ENCODE measurements at regions of chr12 and their contacts with region 1.

Region 1: GRCh38 chr12:54398995-54399793 is 14.7 kb upstream of the ZNF385A start:
- DNase-seq: peak; percentile 84 to 86 (median 85)
- H3K4me3 ChIP-seq: no peak overlapping the region
- H3K4me3 Mint-ChIP-seq: no peak overlapping the region
- H3K27ac ChIP-seq: peak overlapping the region; percentile 10 to 25
- H3K27ac Mint-ChIP-seq: peak overlapping the region in 5 of 7 donors; percentile 35 to 73 (median 43)
- H3K4me1 ChIP-seq: peaks cover 8 to 16% of the 10 kb centered on the region in 2 donors
- H3K4me1 Mint-ChIP-seq: peaks cover 10% of the 10 kb centered on the region
- H3K27me3 ChIP-seq: no peaks in the 10 kb centered on the region
- H3K27me3 Mint-ChIP-seq: no peaks in the 10 kb centered on the region
- CTCF ChIP-seq: peak; percentile 97

Region 2: DNA sequence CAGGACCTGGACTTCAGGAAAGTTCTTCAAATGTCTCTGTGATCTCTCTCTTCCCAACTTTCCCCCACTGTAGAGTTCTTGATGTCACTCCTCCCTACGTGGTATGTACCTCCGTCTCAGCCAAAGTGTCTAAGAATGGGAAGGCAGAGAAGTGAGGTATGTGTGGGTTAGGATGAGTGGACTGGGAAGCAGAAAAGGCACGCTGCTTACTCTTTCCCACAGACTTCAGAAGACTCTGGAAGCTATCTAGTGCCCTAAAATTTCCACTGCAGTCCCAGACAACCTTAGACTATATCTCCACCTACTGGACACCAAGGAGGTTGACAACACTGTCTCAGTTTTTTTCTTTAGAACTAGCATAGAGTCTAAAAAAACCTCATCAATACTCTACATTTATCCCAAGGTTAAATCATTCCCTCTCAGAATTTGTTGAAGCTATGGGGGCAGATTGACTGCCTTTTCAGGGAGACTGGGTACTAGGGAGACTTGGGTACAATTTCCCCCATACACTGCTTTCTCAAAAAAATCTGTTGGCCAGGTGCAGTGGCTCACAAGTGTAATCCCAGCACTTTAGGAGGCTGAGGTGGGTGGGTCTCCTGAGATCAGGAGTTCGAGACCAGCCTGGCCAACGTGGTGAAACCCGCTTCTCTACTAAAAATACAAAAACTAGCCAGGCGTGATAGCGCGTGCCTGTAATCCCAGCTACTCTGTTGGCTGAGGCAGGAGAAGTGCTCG is 40.5 kb after region 1 on chr12:
- intact Hi-C with region 1: loop called (anchors 1 to 2 kb)
- DNase-seq: peak; percentile 45 to 80 (median 70)
- H3K4me3 ChIP-seq: no peak overlapping the region
- H3K4me3 Mint-ChIP-seq: no peak overlapping the region
- H3K27ac ChIP-seq: no peak overlapping the region
- H3K27ac Mint-ChIP-seq: peak overlapping the region in 1 of 7 donors; percentile 56
- H3K4me1 ChIP-seq: peaks cover 9% of the 10 kb centered on the region in 2 donors
- H3K4me1 Mint-ChIP-seq: peaks cover 12% of the 10 kb centered on the region
- H3K27me3 ChIP-seq: no peaks in the 10 kb centered on the region
- H3K27me3 Mint-ChIP-seq: peaks cover 0 to 2% (median 0%) of the 10 kb centered on the region in 3 donors
- CTCF ChIP-seq: peak; percentile 86

Region 3: GRCh38 chr12:54497883-54498282 is 98.7 kb after region 1 on chr12:
- intact Hi-C with region 1: loop called in 1 of 2 experiments (anchors 5 kb)
- DNase-seq: peak; percentile 24 to 52 (median 28)
- H3K4me3 ChIP-seq: peak overlapping the region; percentile 83 to 99 (median 97)
- H3K4me3 Mint-ChIP-seq: peak overlapping the region; percentile 88 to 95
- H3K27ac ChIP-seq: peak overlapping the region; percentile 77 to 97
- H3K27ac Mint-ChIP-seq: peak overlapping the region; percentile 95 to 98 (median 98)
- H3K4me1 ChIP-seq: peaks cover 36 to 46% of the 10 kb centered on the region in 2 donors
- H3K4me1 Mint-ChIP-seq: peaks cover 46% of the 10 kb centered on the region
- H3K27me3 ChIP-seq: no peaks in the 10 kb centered on the region
- H3K27me3 Mint-ChIP-seq: peaks cover 0 to 2% (median 2%) of the 10 kb centered on the region in 3 donors
- CTCF ChIP-seq: peak; percentile 8